Posterior vena cava (tissue), 2 donors: ENCODE measurements at regions of chr4 and their contacts with region 1.

Region 1: GRCh38 chr4:129362674-129363274 is 266.8 kb downstream of the C4orf33 start:
- DNase-seq: no peak

Region 2: GRCh38 chr4:129641179-129641578 is 278.4 kb after region 1 on chr4:
- intact Hi-C with region 1: loop called (anchors 5 to 10 kb)
- DNase-seq: peak; percentile 67

Region 3: DNA sequence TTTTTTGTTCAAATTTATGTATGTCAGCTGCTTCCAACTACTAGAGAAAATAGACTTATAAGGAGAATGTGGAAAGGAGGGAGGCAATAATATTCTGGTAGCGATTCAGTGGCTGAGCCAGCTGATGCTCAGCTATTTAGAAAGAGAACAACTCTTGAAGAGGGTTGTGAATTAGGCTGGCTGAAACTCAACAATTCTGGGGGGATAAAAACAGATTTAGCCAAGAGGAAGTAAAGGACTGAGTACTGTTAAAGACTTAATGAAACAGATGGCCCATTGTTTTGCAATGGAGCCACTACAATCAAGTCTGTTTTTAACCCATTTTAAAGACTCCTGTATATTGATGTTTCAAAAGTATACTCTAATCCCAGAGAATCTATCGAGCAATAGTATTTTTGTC is 792.1 kb after region 1 on chr4:
- intact Hi-C with region 1: loop called in 1 of 2 experiments (anchors 5 kb)
- DNase-seq: no peak